ENCODE measurements at regions of chr1 and their contacts with region 1.

Region 1: DNA sequence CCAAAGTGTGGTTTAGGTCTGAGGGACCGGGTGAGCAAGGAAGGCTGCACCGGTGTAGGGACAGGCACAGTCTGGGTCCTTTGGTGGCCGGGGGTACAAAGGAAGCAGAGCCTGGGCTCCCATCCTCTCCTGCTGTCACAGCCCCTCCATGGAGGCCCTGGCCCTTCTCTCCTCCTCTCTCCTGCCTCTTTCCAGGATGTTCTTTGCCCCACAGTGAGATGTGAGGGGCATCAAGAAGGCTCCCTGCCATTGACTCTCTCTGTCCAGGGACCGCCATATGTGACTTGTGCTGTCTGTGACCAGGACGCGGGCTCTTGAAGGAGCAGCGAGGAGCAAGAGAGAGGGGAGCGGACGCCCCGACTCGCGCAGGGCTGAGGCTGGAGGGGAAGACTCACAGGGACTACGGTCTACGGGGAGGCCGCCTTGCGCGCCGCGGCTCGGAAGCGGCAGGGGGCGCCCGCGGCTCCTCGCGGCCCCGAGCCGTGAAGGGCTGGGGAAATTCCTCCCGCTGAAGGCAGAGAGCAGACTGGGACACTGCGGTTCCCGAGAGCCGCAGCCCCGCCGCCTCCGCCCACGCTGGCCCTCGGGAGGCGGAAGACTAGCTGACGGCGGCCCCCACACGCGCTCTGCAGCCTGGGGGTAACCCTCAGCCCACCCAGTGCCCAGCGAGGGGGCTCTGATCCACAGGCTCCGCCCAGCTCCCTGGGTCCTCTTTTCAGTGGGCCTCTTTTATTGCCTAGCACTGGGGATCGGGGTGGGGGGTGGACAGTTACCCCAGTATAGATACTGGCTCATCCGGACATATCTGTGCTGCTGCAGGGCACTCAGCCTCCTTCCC is 40.8 kb downstream of the MAB21L3 start:
- DNase-seq: peak in 1 of 2 donors; percentile 58
- ATAC-seq: peak; percentile 93 to 97
- H3K4me3 ChIP-seq: peak overlapping the region; percentile 54 to 57 (median 56)
- H3K27ac ChIP-seq: peak overlapping the region; percentile 39 to 60 (median 56)
- H3K4me1 ChIP-seq: peaks cover 5 to 12% of the 10 kb centered on the region in 2 donors
- H3K27me3 ChIP-seq: no peaks in the 10 kb centered on the region
- CTCF ChIP-seq: peak; percentile 83 to 94 (median 91)
- POLR2A ChIP-seq: no peak

Region 2: GRCh38 chr1:116078699-116079213 is 73.2 kb before region 1 on chr1:
- in situ Hi-C with region 1: no loop called
- intact Hi-C with region 1: no loop called
- DNase-seq: no peak
- ATAC-seq: no peak
- H3K4me3 ChIP-seq: no peak overlapping the region
- H3K27ac ChIP-seq: no peak overlapping the region
- H3K4me1 ChIP-seq: no peaks in the 10 kb centered on the region
- H3K27me3 ChIP-seq: no peaks in the 10 kb centered on the region
- CTCF ChIP-seq: no peak
- POLR2A ChIP-seq: no peak

Region 3: DNA sequence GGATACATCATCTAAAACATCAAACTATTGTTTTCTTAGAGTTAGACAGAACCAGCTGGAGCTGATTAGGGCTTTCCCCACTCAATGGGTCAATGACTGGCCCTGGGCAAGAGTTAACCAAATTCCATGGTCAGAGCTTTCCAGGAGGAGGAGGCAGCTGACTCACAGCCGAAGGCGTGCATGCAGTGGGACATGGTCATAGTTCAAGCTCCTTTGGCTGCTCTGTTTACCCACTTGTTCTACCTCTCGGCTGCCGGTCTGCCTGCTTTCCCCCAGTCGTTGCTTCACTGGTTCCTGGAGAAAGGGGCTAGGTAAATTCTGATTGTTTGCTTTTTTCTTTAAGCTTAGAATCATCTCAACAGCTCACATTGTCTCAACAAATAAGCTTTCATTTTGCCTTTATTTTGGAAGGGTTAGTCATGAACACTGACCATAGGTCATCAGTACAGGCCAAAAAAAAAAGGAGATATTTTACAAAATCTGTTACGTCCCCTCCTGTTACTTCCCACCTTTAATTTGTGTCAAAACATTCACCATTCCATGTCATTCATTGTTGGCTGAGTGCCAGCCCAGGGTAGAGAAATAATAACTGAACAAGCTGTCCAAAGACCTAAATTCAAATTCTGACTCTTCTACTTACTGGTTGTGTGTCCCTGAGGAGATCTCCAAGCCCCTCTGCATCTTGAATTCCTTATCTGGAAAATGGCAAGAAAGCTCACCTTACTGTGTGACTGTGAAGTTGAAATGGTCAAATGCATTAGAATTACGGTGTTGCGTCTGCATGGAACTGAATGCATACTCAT is 28.8 kb before region 1 on chr1:
- in situ Hi-C with region 1: no loop called
- intact Hi-C with region 1: no loop called
- DNase-seq: no peak
- ATAC-seq: no peak
- H3K4me3 ChIP-seq: no peak overlapping the region
- H3K27ac ChIP-seq: no peak overlapping the region
- H3K4me1 ChIP-seq: no peaks in the 10 kb centered on the region
- H3K27me3 ChIP-seq: no peaks in the 10 kb centered on the region
- CTCF ChIP-seq: no peak
- POLR2A ChIP-seq: no peak

Region 4: DNA sequence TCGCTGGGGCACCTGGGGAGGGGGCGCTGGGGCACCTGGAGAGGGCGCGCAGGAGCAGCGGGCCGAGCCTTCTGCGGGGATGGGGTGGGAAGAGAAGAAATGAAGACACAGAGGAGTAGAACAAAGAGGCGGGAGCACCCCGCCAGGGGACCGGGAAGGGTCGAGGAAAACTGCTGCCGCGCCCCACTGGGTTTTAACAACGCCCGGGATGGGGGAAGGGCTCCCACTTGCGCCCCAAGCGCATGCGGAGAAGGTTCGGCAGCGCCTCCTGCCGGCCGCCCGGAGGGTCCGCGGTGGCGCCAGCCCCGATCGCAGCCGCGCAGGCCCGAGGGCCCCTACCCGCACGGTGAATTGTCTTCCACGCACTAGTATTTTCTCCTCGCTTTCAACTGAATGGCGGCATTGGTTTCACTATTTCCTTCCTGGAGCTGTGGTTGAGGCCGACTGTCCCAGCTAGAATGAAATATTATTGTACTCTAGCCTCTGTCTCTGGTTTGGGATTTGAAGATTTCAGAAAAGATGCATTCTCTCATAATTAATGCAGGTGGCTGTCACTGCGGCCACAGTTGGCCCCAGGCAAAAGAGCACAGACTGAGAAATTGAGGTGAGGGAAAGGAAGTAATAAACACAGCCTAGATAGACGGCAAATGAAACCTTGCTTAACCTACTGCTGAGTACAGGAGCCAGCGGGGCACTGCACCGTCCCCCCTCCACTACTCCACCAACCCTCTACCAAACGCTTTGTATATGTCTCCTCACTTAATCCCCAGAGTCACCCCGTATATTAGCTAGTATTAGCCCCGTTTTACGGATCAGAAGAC is 16.5 kb after region 1 on chr1:
- in situ Hi-C with region 1: no loop called
- intact Hi-C with region 1: loop called (anchors 2 kb)
- DNase-seq: peak; percentile 43 to 64
- ATAC-seq: peak; percentile 64 to 76
- H3K4me3 ChIP-seq: peak overlapping the region; percentile 45 to 77 (median 54)
- H3K27ac ChIP-seq: peak overlapping the region; percentile 34 to 65 (median 49)
- H3K4me1 ChIP-seq: peaks cover 0 to 13% of the 10 kb centered on the region in 2 donors
- H3K27me3 ChIP-seq: no peaks in the 10 kb centered on the region
- CTCF ChIP-seq: peak; percentile 67 to 87 (median 75)
- POLR2A ChIP-seq: no peak

Region 5: DNA sequence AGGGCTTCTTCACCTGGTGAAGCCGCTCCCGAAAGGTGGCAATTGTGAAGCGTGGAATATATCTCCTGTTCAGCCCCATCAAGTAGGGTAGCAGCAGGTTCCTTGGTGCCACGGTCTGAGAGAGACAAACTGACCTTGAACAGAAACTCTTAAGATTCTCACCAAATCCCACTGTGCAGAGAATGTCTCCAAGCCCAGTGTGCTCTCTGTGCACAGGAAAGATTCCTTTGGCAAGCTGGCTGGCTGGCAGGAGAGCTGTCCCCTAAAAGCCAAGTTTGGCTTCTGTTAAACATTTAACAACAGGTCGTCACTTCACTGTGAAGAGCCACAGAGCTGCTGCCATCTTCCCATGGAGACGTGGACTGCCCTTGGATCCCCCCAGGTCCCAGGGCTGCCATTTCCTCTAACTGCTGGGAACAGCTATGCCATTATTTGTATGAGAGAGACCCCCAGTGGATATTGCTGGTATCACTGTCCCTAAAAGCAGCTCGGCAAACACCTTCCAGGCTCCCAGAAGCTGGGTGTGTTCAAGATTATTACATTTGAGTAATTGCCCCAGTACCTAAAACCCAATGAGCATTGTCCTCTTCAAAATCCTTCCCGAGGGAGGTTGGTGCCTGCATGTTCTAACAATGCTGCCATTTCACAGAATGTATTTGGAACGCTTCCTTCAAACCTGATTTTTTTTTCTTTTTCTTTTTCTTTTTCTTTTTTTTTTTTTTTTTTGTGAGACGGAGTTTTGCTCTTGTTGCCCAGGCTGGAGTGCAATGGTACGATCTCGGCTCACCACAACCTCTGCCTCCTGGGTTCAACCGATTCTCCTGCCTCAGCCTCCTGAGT is 347.1 kb after region 1 on chr1:
- in situ Hi-C with region 1: loop called in 1 of 4 experiments (anchors 10 kb)
- intact Hi-C with region 1: loop called (anchors 1 kb)
- DNase-seq: peak in 1 of 2 donors; percentile 34
- ATAC-seq: peak; percentile 57 to 85
- H3K4me3 ChIP-seq: no peak overlapping the region
- H3K27ac ChIP-seq: no peak overlapping the region
- H3K4me1 ChIP-seq: peaks cover 0 to 8% of the 10 kb centered on the region in 2 donors
- H3K27me3 ChIP-seq: no peaks in the 10 kb centered on the region
- CTCF ChIP-seq: peak; percentile 79 to 86 (median 79)
- POLR2A ChIP-seq: no peak

Measured in gastrocnemius medialis (tissue), 4 donors.